Posterior cingulate gyrus (tissue), 11 donors: ENCODE measurements at regions of chr14 and their contacts with region 1.

Region 1: GRCh38 chr14:20690848-20691523 is 2.4 kb downstream of the ANG start:
- DNase-seq: peak in 5 of 10 donors; percentile 18 to 78 (median 35)

Region 2: GRCh38 chr14:20327005-20327869 is 363.7 kb before region 1 on chr14:
- intact Hi-C with region 1: loop called (anchors 2 kb)
- DNase-seq: no peak

Region 3: GRCh38 chr14:20530771-20531571 is 160.0 kb before region 1 on chr14:
- intact Hi-C with region 1: loop called (anchors 5 kb)
- DNase-seq: peak in 7 of 10 donors; percentile 36 to 88 (median 57)